BJ (cell line): ENCODE measurements at regions of chr2 and their contacts with region 1.

Region 1: GRCh38 chr2:201353116-201353515 is 4.0 kb downstream of the FLACC1 start:
- DNase-seq: no peak
- H3K4me3 ChIP-seq: no peak overlapping the region
- H3K27me3 ChIP-seq: no peaks in the 10 kb centered on the region
- CTCF ChIP-seq: no peak

Region 2: DNA sequence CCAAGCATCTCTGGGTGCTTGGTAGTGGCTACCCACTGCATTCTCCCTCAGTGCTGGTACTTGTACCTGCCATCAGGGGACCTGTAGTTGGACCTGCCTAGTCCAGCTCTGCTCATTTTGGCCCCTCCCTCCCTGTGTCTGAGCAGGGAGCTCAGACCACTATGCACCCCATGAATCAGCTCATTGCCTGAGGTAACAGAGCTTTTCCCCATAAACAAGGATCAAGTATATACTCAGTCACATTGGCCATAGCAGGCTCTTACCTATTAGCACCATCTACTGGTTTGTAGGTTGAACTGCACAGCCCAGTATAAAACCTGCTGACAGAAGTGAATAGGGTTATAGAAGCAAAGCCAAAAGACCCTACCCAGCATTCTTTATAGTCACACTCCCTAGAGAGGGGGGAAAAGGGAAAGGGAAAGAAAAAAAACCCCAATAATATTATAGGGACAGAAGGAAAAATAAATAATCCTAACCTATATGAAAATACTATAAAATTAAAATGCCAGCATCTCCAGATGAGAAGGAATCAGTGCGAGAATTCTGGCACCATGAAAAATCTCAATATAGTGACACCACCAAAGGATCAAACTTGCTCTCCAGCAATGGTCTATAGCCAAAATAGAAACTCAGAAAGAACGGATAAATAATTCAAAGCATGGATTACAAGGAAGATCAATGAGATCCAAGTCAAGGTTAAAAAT is 10.9 kb after region 1 on chr2:
- CTCF ChIA-PET with region 1: interaction called, 15 read pairs
- POLR2A ChIA-PET with region 1: no interaction called
- DNase-seq: no peak
- H3K4me3 ChIP-seq: no peak overlapping the region
- H3K27me3 ChIP-seq: no peaks in the 10 kb centered on the region
- CTCF ChIP-seq: peak; percentile 78

Region 3: GRCh38 chr2:201807452-201807999 is 454.4 kb after region 1 on chr2:
- CTCF ChIA-PET with region 1: no interaction called
- POLR2A ChIA-PET with region 1: no interaction called
- DNase-seq: no peak
- H3K4me3 ChIP-seq: no peak overlapping the region
- H3K27me3 ChIP-seq: no peaks in the 10 kb centered on the region
- CTCF ChIP-seq: no peak